B cell (primary cell): ENCODE measurements at regions of chr17 and their contacts with region 1.

Region 1: GRCh38 chr17:64506576-64507477 is at the start of gene CEP95:
- DNase-seq: peak; percentile 99
- ATAC-seq: peak; percentile 62
- H3K4me3 ChIP-seq: peak within 1 kb of the TSS; percentile 97 to 100 (median 99)
- H3K4me3 Mint-ChIP-seq: peak within 1 kb of the TSS; percentile 97
- H3K27ac ChIP-seq: peak within 1 kb of the TSS; percentile 99 to 100
- H3K27ac Mint-ChIP-seq: peak within 1 kb of the TSS; percentile 99
- H3K4me1 ChIP-seq: peaks cover 31 to 32% of the 10 kb centered on the region in 2 donors
- H3K4me1 Mint-ChIP-seq: peaks cover 48% of the 10 kb centered on the region
- H3K27me3 ChIP-seq: no peaks in the 10 kb centered on the region
- H3K27me3 Mint-ChIP-seq: no peaks in the 10 kb centered on the region
- CTCF ChIP-seq: no peak
- total RNA-seq, gene CEP95: 122 and 129 TPM in 2 replicates

Region 2: GRCh38 chr17:63549946-63550807 is 956.6 kb before region 1 on chr17 and contains the start of gene DCAF7:
- CTCF ChIA-PET with region 1: no interaction called
- POLR2A ChIA-PET with region 1: no interaction called
- intact Hi-C with region 1: loop called (anchors 5 kb)
- DNase-seq: peak; percentile 100
- ATAC-seq: peak; percentile 94
- H3K4me3 ChIP-seq: peak within 1 kb of the TSS; percentile 73 to 91 (median 81)
- H3K4me3 Mint-ChIP-seq: peak within 1 kb of the TSS; percentile 87
- H3K27ac ChIP-seq: peak within 1 kb of the TSS; percentile 81 to 95
- H3K27ac Mint-ChIP-seq: peak within 1 kb of the TSS; percentile 94
- H3K4me1 ChIP-seq: peaks cover 41 to 47% of the 10 kb centered on the region in 2 donors
- H3K4me1 Mint-ChIP-seq: peaks cover 44% of the 10 kb centered on the region
- H3K27me3 ChIP-seq: no peaks in the 10 kb centered on the region
- H3K27me3 Mint-ChIP-seq: no peaks in the 10 kb centered on the region
- CTCF ChIP-seq: no peak
- total RNA-seq, gene DCAF7: 84.7 and 84.8 TPM in 2 replicates

Region 3: DNA sequence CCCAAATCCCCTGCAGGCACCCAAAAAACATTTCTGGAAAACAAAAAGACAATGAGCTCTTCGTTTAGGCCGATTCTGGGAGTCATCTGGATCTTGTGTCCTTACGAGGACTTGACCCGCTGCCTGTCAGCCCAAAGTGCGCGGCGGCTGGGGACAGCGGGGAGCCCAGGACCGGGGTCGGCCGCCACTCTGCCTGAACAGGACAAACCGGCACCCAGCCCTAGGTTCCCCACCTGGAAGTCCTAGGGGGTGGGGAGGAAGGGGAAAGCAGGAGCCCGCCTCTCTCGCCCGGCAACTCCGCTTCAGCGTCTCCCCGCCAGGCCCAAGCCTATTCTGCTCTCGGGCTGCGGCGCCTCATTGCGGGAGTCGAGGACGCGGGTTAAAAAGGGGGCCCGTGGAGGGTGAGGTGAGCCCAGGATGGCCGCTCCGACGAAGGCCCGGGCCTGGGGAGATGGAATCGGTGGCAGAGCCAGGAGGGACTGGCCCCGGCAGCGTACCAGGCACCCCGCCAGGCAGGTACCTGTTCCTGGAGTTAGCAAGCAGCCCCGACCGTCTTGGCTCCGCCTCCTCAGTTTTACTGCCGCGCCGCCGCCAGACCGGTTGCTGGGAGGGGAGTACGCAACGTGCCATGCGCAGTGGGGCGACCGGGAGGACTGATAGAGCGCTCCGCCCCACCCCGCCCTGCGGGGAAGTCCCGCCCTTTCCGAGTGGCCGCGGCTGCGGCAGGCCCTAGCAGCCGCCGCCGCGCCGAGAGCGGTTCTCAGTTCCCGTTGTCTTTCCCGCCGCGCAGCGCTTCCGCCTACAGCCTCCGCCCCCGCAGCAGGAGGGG is 765.4 kb before region 1 on chr17 and contains the start of gene STRADA:
- CTCF ChIA-PET with region 1: no interaction called
- POLR2A ChIA-PET with region 1: no interaction called
- intact Hi-C with region 1: loop called (anchors 5 kb)
- DNase-seq: peak; percentile 99
- ATAC-seq: peak; percentile 89
- H3K4me3 ChIP-seq: peak within 1 kb of the TSS; percentile 85 to 99 (median 93)
- H3K4me3 Mint-ChIP-seq: peak within 1 kb of the TSS; percentile 89
- H3K27ac ChIP-seq: peak within 1 kb of the TSS; percentile 97
- H3K27ac Mint-ChIP-seq: peak within 1 kb of the TSS; percentile 93
- H3K4me1 ChIP-seq: peaks cover 15 to 28% of the 10 kb centered on the region in 2 donors
- H3K4me1 Mint-ChIP-seq: peaks cover 28% of the 10 kb centered on the region
- H3K27me3 ChIP-seq: no peaks in the 10 kb centered on the region
- H3K27me3 Mint-ChIP-seq: no peaks in the 10 kb centered on the region
- CTCF ChIP-seq: no peak
- total RNA-seq, gene STRADA: 87.4 and 93.2 TPM in 2 replicates

Region 4: GRCh38 chr17:64145757-64146417 is 360.9 kb before region 1 on chr17:
- CTCF ChIA-PET with region 1: no interaction called
- POLR2A ChIA-PET with region 1: no interaction called
- intact Hi-C with region 1: loop called (anchors 2 kb)
- DNase-seq: peak; percentile 98
- ATAC-seq: peak; percentile 93
- H3K4me3 ChIP-seq: peak overlapping the region; percentile 77 to 95 (median 92)
- H3K4me3 Mint-ChIP-seq: no peak overlapping the region
- H3K27ac ChIP-seq: peak overlapping the region; percentile 86 to 88
- H3K27ac Mint-ChIP-seq: no peak overlapping the region
- H3K4me1 ChIP-seq: peaks cover 14 to 18% of the 10 kb centered on the region in 2 donors
- H3K4me1 Mint-ChIP-seq: peaks cover 15% of the 10 kb centered on the region
- H3K27me3 ChIP-seq: no peaks in the 10 kb centered on the region
- H3K27me3 Mint-ChIP-seq: no peaks in the 10 kb centered on the region
- CTCF ChIP-seq: no peak

Region 5: GRCh38 chr17:64455993-64456885 is 50.6 kb before region 1 on chr17:
- CTCF ChIA-PET with region 1: no interaction called
- POLR2A ChIA-PET with region 1: interaction called, 18 read pairs
- intact Hi-C with region 1: no loop called
- DNase-seq: peak; percentile 72
- ATAC-seq: peak; percentile 82
- H3K4me3 ChIP-seq: peak overlapping the region in 3 of 5 experiments; percentile 3 to 34 (median 18)
- H3K4me3 Mint-ChIP-seq: peak overlapping the region; percentile 70
- H3K27ac ChIP-seq: peak overlapping the region; percentile 68 to 81
- H3K27ac Mint-ChIP-seq: peak overlapping the region; percentile 83
- H3K4me1 ChIP-seq: peaks cover 44 to 58% of the 10 kb centered on the region in 2 donors
- H3K4me1 Mint-ChIP-seq: peaks cover 54% of the 10 kb centered on the region
- H3K27me3 ChIP-seq: no peaks in the 10 kb centered on the region
- H3K27me3 Mint-ChIP-seq: no peaks in the 10 kb centered on the region
- CTCF ChIP-seq: no peak

Region 6: GRCh38 chr17:64527914-64528313 is 21.1 kb after region 1 on chr17:
- CTCF ChIA-PET with region 1: no interaction called
- POLR2A ChIA-PET with region 1: no interaction called
- intact Hi-C with region 1: no loop called
- DNase-seq: no peak
- ATAC-seq: no peak
- H3K4me3 ChIP-seq: no peak overlapping the region
- H3K4me3 Mint-ChIP-seq: no peak overlapping the region
- H3K27ac ChIP-seq: no peak overlapping the region
- H3K27ac Mint-ChIP-seq: no peak overlapping the region
- H3K4me1 ChIP-seq: no peaks in the 10 kb centered on the region
- H3K4me1 Mint-ChIP-seq: no peaks in the 10 kb centered on the region
- H3K27me3 ChIP-seq: no peaks in the 10 kb centered on the region
- H3K27me3 Mint-ChIP-seq: no peaks in the 10 kb centered on the region
- CTCF ChIP-seq: no peak

Region 7: DNA sequence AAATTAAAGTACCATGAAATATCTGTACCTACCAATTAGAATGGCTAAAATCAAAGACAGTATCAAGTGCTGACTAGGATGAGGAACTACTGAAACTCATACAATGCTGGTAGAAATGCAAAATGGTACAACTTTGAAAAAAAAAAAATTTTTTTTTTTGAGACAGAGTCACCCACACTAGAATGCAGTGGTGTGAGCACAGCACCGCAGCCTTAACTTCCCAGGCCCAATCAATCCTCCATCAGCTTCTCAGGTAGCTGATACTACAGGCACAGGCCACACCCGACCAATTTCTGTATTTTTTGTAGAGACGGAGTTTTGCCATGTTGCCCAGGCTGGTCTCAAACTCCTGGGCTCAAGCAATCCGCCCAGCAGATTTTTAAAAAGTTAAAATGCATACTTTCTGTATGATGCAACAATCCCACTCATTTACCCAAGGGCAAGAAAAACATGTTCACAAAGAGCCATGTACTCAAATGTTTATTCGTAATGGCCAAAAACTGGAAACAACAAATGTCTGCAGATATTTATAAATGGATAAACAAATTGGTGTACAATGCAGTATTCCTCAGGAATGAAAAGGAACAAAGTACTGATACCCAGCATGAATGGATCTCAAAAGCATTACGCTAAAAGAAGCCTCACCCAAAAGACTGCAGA is 146.6 kb after region 1 on chr17:
- CTCF ChIA-PET with region 1: interaction called, 11 read pairs
- POLR2A ChIA-PET with region 1: no interaction called
- intact Hi-C with region 1: no loop called
- DNase-seq: no peak
- ATAC-seq: no peak
- H3K4me3 ChIP-seq: no peak overlapping the region
- H3K4me3 Mint-ChIP-seq: no peak overlapping the region
- H3K27ac ChIP-seq: no peak overlapping the region
- H3K27ac Mint-ChIP-seq: no peak overlapping the region
- H3K4me1 ChIP-seq: no peaks in the 10 kb centered on the region
- H3K4me1 Mint-ChIP-seq: peaks cover 26% of the 10 kb centered on the region
- H3K27me3 ChIP-seq: no peaks in the 10 kb centered on the region
- H3K27me3 Mint-ChIP-seq: no peaks in the 10 kb centered on the region
- CTCF ChIP-seq: no peak

Region 8: GRCh38 chr17:64975329-64976087 is 468.7 kb after region 1 on chr17:
- CTCF ChIA-PET with region 1: no interaction called
- POLR2A ChIA-PET with region 1: interaction called, 3 read pairs
- intact Hi-C with region 1: loop called (anchors 5 kb)
- DNase-seq: peak; percentile 100
- ATAC-seq: peak; percentile 74
- H3K4me3 ChIP-seq: peak overlapping the region in 4 of 5 experiments; percentile 59 to 77 (median 68)
- H3K4me3 Mint-ChIP-seq: peak overlapping the region; percentile 92
- H3K27ac ChIP-seq: peak overlapping the region; percentile 95 to 99
- H3K27ac Mint-ChIP-seq: peak overlapping the region; percentile 99
- H3K4me1 ChIP-seq: peaks cover 28 to 34% of the 10 kb centered on the region in 2 donors
- H3K4me1 Mint-ChIP-seq: peaks cover 56% of the 10 kb centered on the region
- H3K27me3 ChIP-seq: no peaks in the 10 kb centered on the region
- H3K27me3 Mint-ChIP-seq: no peaks in the 10 kb centered on the region
- CTCF ChIP-seq: no peak